Activated B cell treated with CpG ODN at 0.5 μM for 24 hours (primary cell): ENCODE measurements at regions of chr6 and their contacts with region 1.

Region 1: GRCh38 chr6:118856301-118856700 is 37.7 kb upstream of the ASF1A start:
- DNase-seq: no peak
- ATAC-seq: no peak
- H3K4me3 Mint-ChIP-seq: no peak overlapping the region
- H3K27ac Mint-ChIP-seq: no peak overlapping the region
- H3K4me1 Mint-ChIP-seq: peaks cover 23% of the 10 kb centered on the region
- H3K27me3 Mint-ChIP-seq: no peaks in the 10 kb centered on the region
- CTCF ChIP-seq: no peak

Region 2: GRCh38 chr6:118240878-118241528 is 615.3 kb before region 1 on chr6:
- CTCF ChIA-PET with region 1: no interaction called
- POLR2A ChIA-PET with region 1: no interaction called
- intact Hi-C with region 1: no loop called
- DNase-seq: no peak
- ATAC-seq: no peak
- H3K4me3 Mint-ChIP-seq: no peak overlapping the region
- H3K27ac Mint-ChIP-seq: no peak overlapping the region
- H3K4me1 Mint-ChIP-seq: no peaks in the 10 kb centered on the region
- H3K27me3 Mint-ChIP-seq: peaks cover 2% of the 10 kb centered on the region
- CTCF ChIP-seq: no peak

Region 3: GRCh38 chr6:118869894-118870589 is 13.7 kb after region 1 on chr6:
- CTCF ChIA-PET with region 1: no interaction called
- POLR2A ChIA-PET with region 1: no interaction called
- intact Hi-C with region 1: loop called (anchors 2 kb)
- DNase-seq: no peak
- ATAC-seq: no peak
- H3K4me3 Mint-ChIP-seq: no peak overlapping the region
- H3K27ac Mint-ChIP-seq: no peak overlapping the region
- H3K4me1 Mint-ChIP-seq: peaks cover 35% of the 10 kb centered on the region
- H3K27me3 Mint-ChIP-seq: no peaks in the 10 kb centered on the region
- CTCF ChIP-seq: no peak